Head of caudate nucleus (tissue), 42 donors: ENCODE measurements at regions of chr1 and their contacts with region 1.

Region 1: DNA sequence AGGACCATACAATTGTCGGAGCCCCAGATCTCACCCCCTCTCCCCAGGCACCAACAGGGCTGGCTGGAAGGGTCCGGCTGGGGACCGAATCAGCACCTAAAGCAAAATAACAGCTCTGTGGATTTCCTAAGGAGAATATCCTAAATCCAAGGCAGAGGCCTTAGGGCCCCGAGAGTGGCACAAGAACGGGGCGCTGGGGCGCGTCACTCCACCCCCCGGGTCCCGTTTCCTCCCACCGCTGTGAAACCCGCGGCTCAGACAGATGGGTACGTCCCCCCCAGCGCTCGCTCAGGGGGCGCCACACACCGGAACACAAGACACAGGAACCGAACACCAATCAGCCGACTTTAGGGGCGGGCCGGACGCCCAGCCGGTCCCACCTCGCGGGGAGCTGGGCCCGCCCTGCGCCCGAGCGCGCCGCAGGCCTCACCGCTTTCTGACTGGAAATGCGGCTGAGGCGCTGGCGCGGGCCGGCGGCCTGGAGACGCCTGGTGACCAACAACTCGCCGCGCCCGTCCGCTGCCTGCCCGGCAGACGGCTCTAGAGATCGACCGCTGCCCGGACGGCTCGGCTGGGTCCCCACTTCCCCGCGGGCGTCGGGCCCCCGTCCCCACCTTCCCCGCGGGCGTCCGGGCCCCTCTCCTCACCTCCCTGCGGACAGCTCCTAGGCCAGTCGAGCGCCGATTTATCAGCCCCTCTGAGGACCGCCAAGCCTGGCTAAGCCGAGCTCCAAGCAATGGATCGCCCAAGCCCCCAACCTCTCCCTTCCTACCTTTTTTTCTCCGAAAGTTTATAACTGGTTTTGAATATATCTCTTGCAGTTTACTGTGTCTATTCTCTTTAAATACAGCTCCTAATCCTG is at the start of gene HFM1:
- DNase-seq: peak in 41 of 42 donors; percentile 31 to 87 (median 76)

Region 2: DNA sequence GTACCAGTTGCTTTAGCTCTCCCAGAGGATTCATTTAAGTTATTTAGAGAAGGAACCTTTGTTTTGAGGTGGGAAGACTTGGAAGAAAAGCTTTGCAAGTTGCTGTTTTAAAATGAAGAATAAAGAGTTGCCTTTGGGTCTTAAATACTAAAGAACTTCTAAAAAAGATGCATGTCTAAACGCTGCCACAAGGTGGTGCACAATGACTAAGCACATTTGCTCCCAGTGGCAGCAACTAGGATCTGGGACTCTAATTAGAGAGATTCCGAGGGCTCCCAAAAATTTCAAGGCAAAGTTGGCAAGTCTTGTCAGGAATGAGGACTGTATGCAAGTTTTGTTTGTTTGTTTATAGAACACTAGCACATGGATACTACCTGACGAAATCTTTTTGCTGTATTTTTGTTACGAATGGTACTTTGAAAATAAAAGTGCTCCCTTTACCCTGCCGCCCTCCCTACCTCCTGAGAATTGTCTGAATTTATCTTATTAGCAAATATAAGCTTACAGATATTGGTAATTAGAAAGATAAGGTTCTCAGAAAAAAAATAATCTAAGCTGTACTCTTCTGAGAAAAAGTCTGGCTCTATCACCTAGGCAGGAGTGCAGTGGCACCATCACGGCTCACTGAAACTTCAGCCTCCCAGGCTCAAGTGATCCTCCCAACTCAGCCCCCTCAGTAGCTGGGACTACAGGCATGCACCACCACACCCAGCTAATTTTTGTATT is 121.5 kb before region 1 on chr1:
- intact Hi-C with region 1: loop called (anchors 5 kb)
- DNase-seq: peak in 41 of 42 donors; percentile 16 to 89 (median 66)

Region 3: GRCh38 chr1:91500756-91501522 is 96.6 kb after region 1 on chr1 and contains the start of gene CDC7:
- intact Hi-C with region 1: loop called (anchors 5 kb)
- DNase-seq: peak; percentile 75 to 96 (median 89)

Region 4: DNA sequence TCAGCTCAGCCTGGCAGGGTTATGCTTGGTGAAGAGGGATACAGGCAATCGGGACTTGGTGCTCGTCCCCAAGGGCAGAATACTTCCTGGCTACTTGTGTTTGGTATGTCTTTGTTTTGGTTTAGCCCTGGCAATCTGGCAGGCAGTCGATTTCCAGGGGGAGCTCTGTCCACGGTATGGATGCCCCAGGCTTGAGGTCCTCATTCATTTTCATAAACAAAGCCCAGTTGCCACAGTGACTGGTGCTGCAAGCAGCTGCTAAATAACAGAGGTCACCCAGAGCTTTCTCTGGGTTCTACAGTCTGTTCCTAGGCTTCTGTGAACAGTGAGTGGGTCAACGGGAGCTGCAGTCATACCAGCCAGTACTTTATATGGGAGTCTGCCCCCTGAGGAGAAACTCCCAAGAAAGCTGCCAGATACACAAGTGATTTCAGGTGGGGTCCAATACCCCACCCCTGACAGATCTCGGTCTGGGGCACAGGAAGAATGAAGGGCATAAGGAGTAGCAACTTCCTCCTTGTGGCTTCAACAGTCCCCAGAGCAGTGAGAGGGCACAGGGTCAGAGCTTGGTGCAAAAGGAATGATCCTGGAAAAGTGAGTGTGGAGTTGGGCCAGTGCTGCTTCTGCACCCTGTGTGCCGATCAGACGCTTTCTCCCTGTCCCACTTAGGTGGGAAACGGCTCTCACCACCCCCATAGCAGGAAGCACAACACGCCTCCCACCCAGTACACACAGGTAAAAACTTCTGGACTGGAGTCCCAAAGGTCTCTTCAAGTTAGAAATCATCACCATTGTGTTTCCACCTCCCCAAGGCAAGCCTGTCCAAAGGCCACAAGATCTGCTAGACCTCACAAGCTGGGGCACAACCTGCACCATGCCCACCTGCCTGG is 426.1 kb after region 1 on chr1:
- intact Hi-C with region 1: no loop called
- DNase-seq: peak in 36 of 42 donors; percentile 7 to 64 (median 29)